ENCODE measurements at regions of chr5 and their contacts with region 1.

Region 1: DNA sequence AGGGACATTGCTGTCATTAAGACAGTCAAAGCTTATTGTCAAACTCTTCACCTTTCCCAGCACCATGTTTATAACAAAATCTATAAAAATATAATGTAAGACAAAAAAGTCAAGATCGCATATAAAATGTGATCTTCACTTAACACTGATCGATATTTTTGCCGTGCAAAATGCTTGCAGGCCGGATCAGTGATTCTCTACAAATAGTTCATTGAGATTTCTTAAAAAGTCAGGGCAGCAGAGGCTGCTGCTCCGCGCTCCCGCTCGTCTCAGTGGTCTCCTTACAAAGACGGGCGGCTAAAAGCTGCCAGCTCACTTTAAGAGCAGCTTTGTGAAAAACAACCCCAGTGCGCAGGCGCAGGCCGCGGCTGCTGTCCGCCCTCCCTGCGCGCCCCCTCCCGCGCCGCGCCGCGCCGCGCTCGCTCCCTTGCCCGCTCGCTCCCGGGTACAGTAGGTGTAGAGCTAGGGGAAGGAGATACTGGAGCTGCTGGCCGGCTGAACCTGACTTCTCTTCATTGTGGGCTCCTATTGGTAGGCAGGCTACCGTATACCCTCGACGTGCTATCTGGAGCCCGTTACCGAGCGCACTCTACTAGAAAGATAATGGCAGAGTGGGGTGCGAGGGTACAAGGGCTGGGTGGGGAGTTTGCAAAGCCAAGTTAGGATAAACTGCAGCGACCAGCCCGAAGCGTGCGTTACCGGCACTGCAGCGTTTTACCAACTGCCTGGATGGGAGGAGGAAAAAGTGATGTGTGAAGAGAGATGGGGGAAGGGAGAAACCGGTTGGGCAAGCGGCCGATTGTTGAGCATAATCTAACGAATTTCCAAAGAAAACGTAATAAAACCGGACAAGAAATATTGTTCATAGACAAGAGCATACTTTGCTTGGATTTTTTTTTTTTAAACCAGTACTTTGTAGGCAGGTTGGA is at the start of gene ARRDC3:
- DNase-seq: peak; percentile 97
- ATAC-seq: peak; percentile 43
- H3K4me3 Mint-ChIP-seq: peak within 1 kb of the TSS; percentile 93
- H3K27ac Mint-ChIP-seq: peak within 1 kb of the TSS; percentile 97
- H3K4me1 Mint-ChIP-seq: peaks cover 28% of the 10 kb centered on the region
- H3K27me3 Mint-ChIP-seq: no peaks in the 10 kb centered on the region
- CTCF ChIP-seq: no peak
- total RNA-seq, gene ARRDC3: 56.3 and 65.3 TPM in 2 replicates

Region 2: GRCh38 chr5:90474235-90475109 is 908.8 kb before region 1 on chr5 and contains the starts of genes MBLAC2 and POLR3G:
- CTCF ChIA-PET with region 1: no interaction called
- POLR2A ChIA-PET with region 1: interaction called, 5 read pairs
- intact Hi-C with region 1: loop called (anchors 1 kb)
- DNase-seq: peak; percentile 86
- ATAC-seq: peak; percentile 91
- H3K4me3 Mint-ChIP-seq: peak within 1 kb of the TSS; percentile 98
- H3K27ac Mint-ChIP-seq: peak within 1 kb of the TSS; percentile 93
- H3K4me1 Mint-ChIP-seq: peaks cover 27% of the 10 kb centered on the region
- H3K27me3 Mint-ChIP-seq: no peaks in the 10 kb centered on the region
- CTCF ChIP-seq: no peak
- total RNA-seq, gene MBLAC2: 6.4 and 7.3 TPM in 2 replicates
- total RNA-seq, gene POLR3G: 2.9 and 3.1 TPM in 2 replicates

Region 3: GRCh38 chr5:90932052-90932699 is 451.1 kb before region 1 on chr5:
- CTCF ChIA-PET with region 1: interaction called, 30 read pairs
- POLR2A ChIA-PET with region 1: no interaction called
- intact Hi-C with region 1: loop called (anchors 1 kb)
- DNase-seq: no peak
- ATAC-seq: no peak
- H3K4me3 Mint-ChIP-seq: no peak overlapping the region
- H3K27ac Mint-ChIP-seq: no peak overlapping the region
- H3K4me1 Mint-ChIP-seq: no peaks in the 10 kb centered on the region
- H3K27me3 Mint-ChIP-seq: no peaks in the 10 kb centered on the region
- CTCF ChIP-seq: no peak

Region 4: DNA sequence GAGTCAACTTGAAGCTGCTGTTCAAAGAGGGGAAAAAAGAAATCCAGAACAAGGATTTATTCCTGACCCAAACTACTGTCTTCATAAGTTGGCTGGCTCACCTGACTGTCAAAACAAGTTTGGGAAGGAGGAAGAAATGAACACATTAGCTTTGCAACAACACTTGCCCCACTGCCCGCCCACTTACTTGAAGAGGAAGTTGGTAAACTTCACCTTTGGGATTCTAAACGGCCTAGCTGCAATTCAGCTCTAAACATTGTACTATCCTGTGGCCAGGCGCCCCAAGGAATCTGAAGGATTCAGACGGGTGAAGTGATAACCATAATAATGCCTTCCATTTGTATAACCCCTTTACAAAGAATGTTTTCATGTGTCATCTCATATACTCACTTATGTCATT is 199.6 kb before region 1 on chr5:
- CTCF ChIA-PET with region 1: interaction called, 12 read pairs
- POLR2A ChIA-PET with region 1: interaction called, 8 read pairs
- intact Hi-C with region 1: no loop called
- DNase-seq: no peak
- ATAC-seq: no peak
- H3K4me3 Mint-ChIP-seq: no peak overlapping the region
- H3K27ac Mint-ChIP-seq: no peak overlapping the region
- H3K4me1 Mint-ChIP-seq: peaks cover 27% of the 10 kb centered on the region
- H3K27me3 Mint-ChIP-seq: peaks cover 5% of the 10 kb centered on the region
- CTCF ChIP-seq: no peak

Region 5: GRCh38 chr5:91245871-91246270 is 137.4 kb before region 1 on chr5:
- CTCF ChIA-PET with region 1: interaction called, 15 read pairs
- POLR2A ChIA-PET with region 1: interaction called, 3 read pairs
- intact Hi-C with region 1: no loop called
- DNase-seq: no peak
- ATAC-seq: no peak
- H3K4me3 Mint-ChIP-seq: no peak overlapping the region
- H3K27ac Mint-ChIP-seq: no peak overlapping the region
- H3K4me1 Mint-ChIP-seq: no peaks in the 10 kb centered on the region
- H3K27me3 Mint-ChIP-seq: peaks cover 8% of the 10 kb centered on the region
- CTCF ChIP-seq: no peak

Region 6: GRCh38 chr5:91311697-91312501 is 71.4 kb before region 1 on chr5:
- CTCF ChIA-PET with region 1: interaction called, 21 read pairs
- POLR2A ChIA-PET with region 1: interaction called, 72 read pairs
- intact Hi-C with region 1: loop called (anchors 1 kb)
- DNase-seq: no peak
- ATAC-seq: peak; percentile 84
- H3K4me3 Mint-ChIP-seq: peak overlapping the region; percentile 70
- H3K27ac Mint-ChIP-seq: peak overlapping the region; percentile 88
- H3K4me1 Mint-ChIP-seq: peaks cover 53% of the 10 kb centered on the region
- H3K27me3 Mint-ChIP-seq: no peaks in the 10 kb centered on the region
- CTCF ChIP-seq: no peak

Region 7: GRCh38 chr5:91366571-91366970 is 16.7 kb before region 1 on chr5:
- CTCF ChIA-PET with region 1: interaction called, 13 read pairs
- POLR2A ChIA-PET with region 1: interaction called, 103 read pairs
- intact Hi-C with region 1: loop called (anchors 2 kb)
- DNase-seq: no peak
- ATAC-seq: no peak
- H3K4me3 Mint-ChIP-seq: no peak overlapping the region
- H3K27ac Mint-ChIP-seq: no peak overlapping the region
- H3K4me1 Mint-ChIP-seq: peaks cover 12% of the 10 kb centered on the region
- H3K27me3 Mint-ChIP-seq: no peaks in the 10 kb centered on the region
- CTCF ChIP-seq: no peak

Region 8: DNA sequence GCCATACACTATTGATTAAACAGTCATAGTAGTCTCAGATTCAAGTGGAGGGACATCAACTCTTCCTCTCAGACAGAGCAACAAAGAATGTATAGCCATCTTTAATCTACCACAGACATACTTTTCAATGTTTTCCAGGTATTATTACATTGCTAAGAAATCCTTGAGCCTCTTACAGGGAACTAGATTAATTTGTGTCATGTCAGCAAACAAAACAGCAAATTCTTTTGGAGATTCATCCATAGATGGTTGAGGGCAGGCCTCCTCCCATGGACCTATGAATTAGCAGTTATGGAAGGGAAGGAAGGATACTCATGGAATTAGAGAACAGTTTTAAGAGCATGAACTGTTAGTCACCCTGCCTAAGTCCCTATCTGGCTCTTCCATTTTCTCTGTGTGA is 47.7 kb after region 1 on chr5:
- CTCF ChIA-PET with region 1: no interaction called
- POLR2A ChIA-PET with region 1: no interaction called
- intact Hi-C with region 1: no loop called
- DNase-seq: no peak
- ATAC-seq: no peak
- H3K4me3 Mint-ChIP-seq: no peak overlapping the region
- H3K27ac Mint-ChIP-seq: no peak overlapping the region
- H3K4me1 Mint-ChIP-seq: peaks cover 14% of the 10 kb centered on the region
- H3K27me3 Mint-ChIP-seq: no peaks in the 10 kb centered on the region
- CTCF ChIP-seq: no peak

Measured in activated B cell treated with CpG ODN at 0.5 μM for 24 hours (primary cell).